ENCODE measurements at regions of chr4 and their contacts with region 1.

Region 1: GRCh38 chr4:78845472-78845871 is 69.3 kb downstream of the BMP2K start:
- DNase-seq: no peak
- ATAC-seq: no peak
- H3K4me3 ChIP-seq: no peak overlapping the region
- H3K27ac ChIP-seq: no peak overlapping the region
- H3K4me1 ChIP-seq: peaks cover 0 to 14% (median 0%) of the 10 kb centered on the region in 9 donors
- H3K27me3 ChIP-seq: no peaks in the 10 kb centered on the region
- CTCF ChIP-seq: no peak

Region 2: DNA sequence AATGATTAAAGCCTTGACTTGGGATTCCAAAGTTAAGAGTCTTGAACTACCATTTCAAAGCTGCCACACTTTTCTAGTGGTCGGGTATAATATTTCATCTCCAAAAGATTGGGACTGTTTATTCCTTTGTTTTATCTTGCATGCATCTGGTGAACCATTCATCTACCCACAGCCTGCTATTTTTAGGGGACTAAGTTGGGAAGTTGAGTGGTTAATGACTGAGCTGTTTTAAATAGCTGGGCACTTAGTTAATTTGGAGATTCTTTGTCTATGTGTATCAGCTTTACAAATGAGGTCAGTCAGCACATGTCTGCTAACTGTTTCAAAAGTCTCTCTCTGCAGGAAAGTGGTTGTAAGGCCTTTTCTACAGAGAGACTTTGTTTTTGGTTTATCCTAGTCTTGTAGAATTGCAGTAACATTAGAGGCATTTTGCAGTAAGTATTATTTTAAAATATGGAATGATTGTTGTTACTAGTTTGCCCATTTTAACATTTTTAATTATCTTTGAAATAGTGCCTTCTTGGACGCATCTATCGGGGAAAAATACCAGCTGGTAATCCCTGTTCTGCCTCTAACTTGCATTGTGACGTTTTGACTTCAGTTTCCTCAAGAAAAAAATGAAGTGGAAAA is 61.1 kb before region 1 on chr4:
- intact Hi-C with region 1: loop called in 2 of 10 experiments (anchors 5 to 10 kb)
- DNase-seq: no peak
- ATAC-seq: peak in 6 of 8 donors; percentile 25 to 84 (median 72)
- H3K4me3 ChIP-seq: no peak overlapping the region
- H3K27ac ChIP-seq: peak overlapping the region in 9 of 10 donors; percentile 2 to 66 (median 39)
- H3K4me1 ChIP-seq: peaks cover 0 to 79% (median 54%) of the 10 kb centered on the region in 9 donors
- H3K27me3 ChIP-seq: no peaks in the 10 kb centered on the region
- CTCF ChIP-seq: no peak

Region 3: DNA sequence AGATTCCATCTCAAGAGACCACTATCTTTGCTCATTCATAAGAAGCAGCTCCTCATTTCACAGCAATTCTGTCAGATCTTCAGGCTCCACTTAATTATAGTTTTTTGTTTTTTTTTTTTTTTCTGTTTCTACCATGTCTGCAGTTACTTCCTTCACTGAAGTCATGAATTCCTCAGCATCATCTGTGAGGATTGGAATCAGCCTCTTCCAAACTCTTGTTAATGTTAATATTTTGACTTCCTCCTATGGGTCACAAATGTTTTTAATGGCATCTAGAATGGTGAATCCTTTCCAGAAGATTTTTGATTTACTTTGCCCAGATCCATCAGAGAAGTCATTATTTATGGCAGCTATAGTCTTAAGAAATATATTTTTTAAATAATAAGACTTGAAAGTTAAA is 16.2 kb before region 1 on chr4:
- intact Hi-C with region 1: no loop called
- DNase-seq: no peak
- ATAC-seq: no peak
- H3K4me3 ChIP-seq: no peak overlapping the region
- H3K27ac ChIP-seq: no peak overlapping the region
- H3K4me1 ChIP-seq: peaks cover 0 to 8% (median 0%) of the 10 kb centered on the region in 9 donors
- H3K27me3 ChIP-seq: no peaks in the 10 kb centered on the region
- CTCF ChIP-seq: no peak

Region 4: GRCh38 chr4:78990938-78991810 is 145.7 kb after region 1 on chr4:
- intact Hi-C with region 1: no loop called
- DNase-seq: no peak
- ATAC-seq: peak in 2 of 8 donors; percentile 68 to 75
- H3K4me3 ChIP-seq: no peak overlapping the region
- H3K27ac ChIP-seq: no peak overlapping the region
- H3K4me1 ChIP-seq: no peaks in the 10 kb centered on the region
- H3K27me3 ChIP-seq: no peaks in the 10 kb centered on the region
- CTCF ChIP-seq: no peak

Measured in heart right ventricle (tissue), 16 donors.